GM12878 (cell line): ENCODE measurements at regions of chr10 and their contacts with region 1.

Region 1: GRCh38 chr10:89793649-89794254 is 92.4 kb downstream of the KIF20B start:
- DNase-seq: peak; percentile 30
- ATAC-seq: peak; percentile 92
- H3K4me3 ChIP-seq: no peak overlapping the region
- H3K27ac ChIP-seq: no peak overlapping the region
- H3K4me1 ChIP-seq: no peaks in the 10 kb centered on the region
- H3K27me3 ChIP-seq: no peaks in the 10 kb centered on the region
- CTCF ChIP-seq: peak; percentile 70 to 79 (median 71)
- EP300 ChIP-seq: no peak
- POLR2A ChIP-seq: no peak
- RAD21 ChIP-seq: peak; percentile 99

Region 2: DNA sequence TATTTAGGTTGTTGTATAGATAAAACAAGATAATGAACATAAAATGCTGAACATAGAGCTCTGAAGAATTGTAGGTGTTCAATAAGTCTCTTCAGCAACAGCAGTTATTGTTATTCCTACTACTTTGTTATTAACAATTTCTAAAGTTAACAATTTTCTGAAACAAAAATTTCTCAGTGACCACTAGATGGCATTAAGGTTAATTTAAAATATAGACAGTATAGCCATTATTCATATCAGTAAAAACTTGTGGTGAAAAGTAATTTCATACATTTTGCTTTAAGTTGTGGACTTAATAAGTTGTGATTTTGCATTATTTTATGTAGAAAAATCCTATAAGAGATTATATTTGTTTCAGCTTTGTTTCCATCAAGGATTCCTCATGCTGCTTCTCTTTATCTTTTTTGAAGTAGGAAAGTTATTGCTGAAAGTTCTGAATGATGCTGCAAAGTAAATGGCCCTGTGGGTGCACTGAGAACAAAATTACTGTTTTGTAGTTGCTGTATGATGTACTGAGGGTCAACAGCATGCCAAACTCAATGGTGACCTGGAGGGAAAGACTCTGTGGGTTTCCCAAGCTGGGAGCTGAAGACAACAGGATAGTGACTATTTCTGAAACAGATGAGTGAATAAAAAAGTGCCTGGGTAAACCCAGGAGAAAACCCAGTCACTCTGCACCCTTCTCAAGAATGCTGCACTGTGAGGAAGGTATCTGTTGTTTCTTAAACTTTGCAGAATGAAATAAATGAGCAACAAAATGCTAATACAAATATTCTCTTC is 161.2 kb after region 1 on chr10:
- CTCF ChIA-PET with region 1: no interaction called
- POLR2A ChIA-PET with region 1: no interaction called
- RAD21 ChIA-PET with region 1: no interaction called
- SMC1A ChIA-PET with region 1: interaction called, 3 read pairs
- in situ Hi-C with region 1: no loop called
- intact Hi-C with region 1: loop called (anchors 5 kb)
- DNase-seq: peak; percentile 21
- ATAC-seq: peak; percentile 38
- H3K4me3 ChIP-seq: no peak overlapping the region
- H3K27ac ChIP-seq: no peak overlapping the region
- H3K4me1 ChIP-seq: no peaks in the 10 kb centered on the region
- H3K27me3 ChIP-seq: no peaks in the 10 kb centered on the region
- CTCF ChIP-seq: peak in 1 of 3 experiments; percentile 26; a peak in 1 of 6 replicates
- EP300 ChIP-seq: no peak
- POLR2A ChIP-seq: no peak
- RAD21 ChIP-seq: peak; percentile 22; the same call in 1 of the 2 replicates

Region 3: GRCh38 chr10:90319188-90319914 is 525.6 kb after region 1 on chr10:
- CTCF ChIA-PET with region 1: no interaction called
- POLR2A ChIA-PET with region 1: no interaction called
- RAD21 ChIA-PET with region 1: no interaction called
- SMC1A ChIA-PET with region 1: no interaction called
- in situ Hi-C with region 1: no loop called
- intact Hi-C with region 1: loop called (anchors 10 kb)
- DNase-seq: peak; percentile 48
- ATAC-seq: peak; percentile 98
- H3K4me3 ChIP-seq: no peak overlapping the region
- H3K27ac ChIP-seq: no peak overlapping the region
- H3K4me1 ChIP-seq: no peaks in the 10 kb centered on the region
- H3K27me3 ChIP-seq: no peaks in the 10 kb centered on the region
- CTCF ChIP-seq: no peak
- EP300 ChIP-seq: peak in 1 of 2 experiments; percentile 52; a peak in 1 of 4 replicates
- POLR2A ChIP-seq: no peak
- RAD21 ChIP-seq: no peak

Region 4: DNA sequence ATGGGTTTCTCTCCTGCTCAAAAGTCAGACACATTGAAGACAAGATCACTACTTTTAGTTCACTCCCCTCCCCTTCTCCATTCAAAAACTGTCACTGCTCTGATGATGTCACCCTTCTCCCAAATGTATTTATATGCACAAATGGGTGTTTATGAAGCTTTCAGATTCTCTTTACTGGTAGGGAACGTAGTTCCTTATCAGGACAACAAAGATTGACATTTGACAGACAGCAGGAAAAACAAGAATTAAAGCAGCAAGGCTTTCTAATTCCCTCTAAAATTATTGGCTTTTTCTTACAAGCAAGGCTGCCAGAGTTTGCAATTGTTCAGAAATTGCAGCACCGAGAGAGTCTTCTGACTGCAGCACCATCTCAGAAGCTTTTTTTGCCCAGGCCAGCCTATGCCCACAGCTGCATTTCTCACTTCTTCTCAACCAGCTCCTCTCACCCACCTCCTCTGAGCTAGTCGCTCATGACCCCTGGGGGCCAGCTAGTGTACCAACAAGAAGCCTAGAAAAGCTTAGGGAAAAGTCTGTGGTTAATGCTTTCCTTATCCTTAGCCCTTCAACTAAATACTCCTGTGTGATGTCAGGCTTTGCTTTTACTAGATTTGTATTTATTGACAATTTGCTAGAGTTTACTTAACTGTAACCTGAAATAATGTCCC is 799.0 kb after region 1 on chr10:
- CTCF ChIA-PET with region 1: interaction called, 5 read pairs
- POLR2A ChIA-PET with region 1: no interaction called
- RAD21 ChIA-PET with region 1: interaction called, 8 read pairs
- SMC1A ChIA-PET with region 1: interaction called, 3 read pairs
- in situ Hi-C with region 1: loop called (anchors 10 kb)
- intact Hi-C with region 1: loop called (anchors 1 kb)
- DNase-seq: peak; percentile 8
- ATAC-seq: peak; percentile 94
- H3K4me3 ChIP-seq: no peak overlapping the region
- H3K27ac ChIP-seq: no peak overlapping the region
- H3K4me1 ChIP-seq: no peaks in the 10 kb centered on the region
- H3K27me3 ChIP-seq: no peaks in the 10 kb centered on the region
- CTCF ChIP-seq: peak; percentile 51 to 56 (median 51)
- EP300 ChIP-seq: no peak
- POLR2A ChIP-seq: no peak
- RAD21 ChIP-seq: peak; percentile 80

Region 5: DNA sequence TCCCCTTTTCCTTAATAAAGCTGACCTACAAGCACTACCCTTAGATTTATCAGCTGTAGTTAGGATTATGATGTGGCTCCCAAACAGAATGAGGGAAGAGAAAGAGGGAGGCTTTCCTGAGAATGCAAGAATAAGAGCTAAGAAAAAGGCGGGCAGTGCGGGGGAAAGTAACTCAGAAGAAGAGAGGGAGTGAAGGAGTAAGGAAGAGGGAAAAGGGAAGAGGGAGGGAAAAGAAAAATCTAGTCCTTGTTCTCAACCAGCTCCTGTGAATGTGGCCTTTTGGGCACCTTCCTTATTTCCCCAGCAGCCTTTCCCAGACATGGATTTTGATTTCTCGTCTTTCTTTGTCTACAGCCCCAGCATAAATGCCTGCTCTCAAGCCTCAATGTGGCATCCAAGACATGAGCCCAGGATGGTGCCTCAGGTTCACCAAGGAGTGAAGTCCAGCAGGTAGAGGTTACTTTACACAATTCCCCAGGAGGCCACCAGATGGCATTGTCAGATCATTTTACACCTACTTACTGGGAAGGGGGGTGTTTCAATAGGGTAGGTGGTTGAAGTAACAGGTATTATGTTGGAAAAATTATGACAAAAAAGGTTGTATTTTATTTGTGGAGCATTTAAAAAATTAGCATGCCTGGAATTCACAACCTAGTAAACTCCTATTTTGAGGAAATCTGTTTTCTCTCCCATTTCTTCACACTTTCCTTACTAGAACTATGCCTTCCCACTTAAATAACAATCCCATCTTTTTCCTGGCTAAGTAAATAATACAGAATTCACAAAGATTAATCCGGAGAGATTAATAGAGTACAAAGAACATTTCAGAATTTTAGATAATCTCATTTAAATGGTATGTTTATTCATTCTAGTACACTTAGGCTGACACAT is 957.6 kb after region 1 on chr10:
- CTCF ChIA-PET with region 1: interaction called, 3 read pairs
- POLR2A ChIA-PET with region 1: no interaction called
- RAD21 ChIA-PET with region 1: no interaction called
- SMC1A ChIA-PET with region 1: interaction called, 3 read pairs
- in situ Hi-C with region 1: no loop called
- intact Hi-C with region 1: loop called (anchors 2 kb)
- DNase-seq: peak; percentile 27
- ATAC-seq: peak; percentile 95
- H3K4me3 ChIP-seq: no peak overlapping the region
- H3K27ac ChIP-seq: no peak overlapping the region
- H3K4me1 ChIP-seq: no peaks in the 10 kb centered on the region
- H3K27me3 ChIP-seq: peaks cover 0 to 4% of the 10 kb centered on the region in 2 experiments; a peak in 1 of 4 replicates
- CTCF ChIP-seq: peak; percentile 75 to 78 (median 76); a peak in 5 of 6 replicates
- EP300 ChIP-seq: no peak
- POLR2A ChIP-seq: no peak
- RAD21 ChIP-seq: peak; percentile 94

Region 6: DNA sequence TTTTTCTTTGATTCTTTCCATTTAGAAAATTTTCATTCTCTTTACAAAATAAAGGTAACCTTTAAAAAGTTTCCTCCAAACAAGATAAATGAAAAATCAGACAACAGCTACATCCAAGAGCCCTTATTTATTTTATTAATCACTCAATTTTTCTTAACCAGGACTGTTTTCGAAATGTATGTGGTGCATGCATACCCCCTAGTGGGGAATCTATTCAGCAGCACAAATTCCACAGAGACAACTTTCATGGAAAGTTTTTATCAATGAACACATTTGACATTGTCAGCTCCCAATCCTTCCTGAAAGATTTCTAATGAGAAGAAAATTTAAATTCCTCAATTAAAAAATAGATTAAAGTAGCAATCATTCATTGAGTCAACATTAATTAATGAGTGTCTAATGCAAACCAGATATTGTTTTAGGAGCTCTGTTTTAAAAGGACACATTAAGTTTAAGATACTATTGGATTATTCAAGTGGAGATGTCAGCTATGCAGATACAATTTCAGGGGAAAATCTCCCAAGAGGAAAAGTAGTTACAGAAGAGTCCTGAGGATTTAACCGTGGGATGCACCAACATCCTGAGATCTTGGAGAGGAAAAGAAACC is 1069.3 kb after region 1 on chr10:
- CTCF ChIA-PET with region 1: interaction called, 3 read pairs
- POLR2A ChIA-PET with region 1: no interaction called
- RAD21 ChIA-PET with region 1: interaction called, 3 read pairs
- SMC1A ChIA-PET with region 1: no interaction called
- in situ Hi-C with region 1: loop called (anchors 5 kb)
- intact Hi-C with region 1: loop called (anchors 2 kb)
- DNase-seq: no peak
- ATAC-seq: peak; percentile 23; the same call in 1 of the 3 replicates
- H3K4me3 ChIP-seq: no peak overlapping the region
- H3K27ac ChIP-seq: no peak overlapping the region
- H3K4me1 ChIP-seq: no peaks in the 10 kb centered on the region
- H3K27me3 ChIP-seq: no peaks in the 10 kb centered on the region; a peak in 2 of 4 replicates
- CTCF ChIP-seq: peak; percentile 58 to 69 (median 66)
- EP300 ChIP-seq: no peak
- POLR2A ChIP-seq: no peak
- RAD21 ChIP-seq: peak; percentile 76